Vagina (tissue), 2 donors: ENCODE measurements at regions of chr13 and their contacts with region 1.

Region 1: GRCh38 chr13:49210669-49211068 is 9.5 kb upstream of the MLNR start:
- DNase-seq: no peak
- H3K4me3 ChIP-seq: no peak overlapping the region
- H3K27ac ChIP-seq: no peak overlapping the region
- H3K4me1 ChIP-seq: no peaks in the 10 kb centered on the region
- H3K27me3 ChIP-seq: no peaks in the 10 kb centered on the region
- CTCF ChIP-seq: no peak
- POLR2A ChIP-seq: no peak

Region 2: DNA sequence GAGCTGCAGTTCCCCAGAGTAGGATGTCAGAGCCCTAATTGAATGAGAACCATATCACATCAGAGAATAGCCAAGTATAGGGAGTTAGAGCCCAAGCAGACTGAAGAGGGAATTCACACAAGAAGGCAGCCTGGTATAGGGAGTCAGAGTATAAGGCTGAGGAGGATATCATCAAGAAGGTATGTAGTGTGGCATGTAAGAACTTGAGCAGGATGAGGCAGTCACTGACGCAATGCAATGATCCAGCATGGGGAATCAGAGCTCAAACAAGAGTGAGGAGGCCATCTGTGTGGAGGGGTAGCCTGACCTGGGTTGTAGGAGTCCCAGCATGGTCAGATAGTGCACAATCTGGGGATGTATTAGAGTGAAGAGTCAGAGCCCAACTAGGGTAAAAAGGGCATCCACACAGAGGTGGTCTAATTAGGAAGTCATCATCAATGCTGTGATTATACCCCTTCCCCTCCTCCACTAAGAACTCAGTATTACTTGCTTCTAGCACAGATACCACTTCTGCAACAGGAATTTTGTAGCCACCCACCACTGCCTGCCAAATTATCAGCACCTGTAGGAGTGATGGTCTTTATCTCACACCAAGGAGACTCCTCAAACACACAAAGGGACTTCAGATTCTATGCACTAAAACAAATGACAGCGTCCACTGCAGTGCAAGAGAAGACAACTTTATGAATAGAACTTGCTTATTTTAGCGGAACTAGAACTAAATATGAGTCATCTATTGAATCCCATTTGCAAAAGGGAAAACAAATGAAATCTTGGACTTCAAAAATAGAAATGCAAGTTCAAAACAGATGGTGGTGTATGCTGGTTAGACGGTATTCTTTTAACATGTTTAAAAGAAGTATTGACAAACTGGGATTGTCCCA is 127.8 kb before region 1 on chr13:
- intact Hi-C with region 1: no loop called
- DNase-seq: no peak
- H3K4me3 ChIP-seq: no peak overlapping the region
- H3K27ac ChIP-seq: no peak overlapping the region
- H3K4me1 ChIP-seq: no peaks in the 10 kb centered on the region
- H3K27me3 ChIP-seq: no peaks in the 10 kb centered on the region
- CTCF ChIP-seq: no peak
- POLR2A ChIP-seq: no peak

Region 3: DNA sequence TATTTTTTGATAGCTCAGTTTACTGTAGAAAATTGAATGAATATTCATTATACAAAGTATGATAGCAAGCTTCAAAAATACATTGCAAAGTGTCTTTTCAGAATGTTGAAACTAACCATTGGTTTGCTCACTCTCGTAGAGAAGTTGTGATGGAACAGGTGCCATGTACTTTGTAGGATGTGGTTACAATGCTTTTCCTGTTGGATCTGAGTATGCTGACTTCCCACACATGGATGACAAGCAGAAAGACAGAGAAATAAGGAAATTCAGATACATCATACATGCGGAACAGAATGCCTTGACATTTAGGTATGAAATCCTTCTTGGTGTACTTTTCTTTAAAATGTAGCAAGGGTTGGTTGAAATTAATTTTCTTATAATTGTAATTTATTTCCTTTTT is 67.5 kb after region 1 on chr13:
- intact Hi-C with region 1: loop called (anchors 2 kb)
- DNase-seq: no peak
- H3K4me3 ChIP-seq: no peak overlapping the region
- H3K27ac ChIP-seq: no peak overlapping the region
- H3K4me1 ChIP-seq: no peaks in the 10 kb centered on the region
- H3K27me3 ChIP-seq: no peaks in the 10 kb centered on the region
- CTCF ChIP-seq: no peak
- POLR2A ChIP-seq: no peak